Activated naive CD4-positive, alpha-beta T cell treated with anti-CD3 and anti-CD28 coated beads for 36 hours (primary cell): ENCODE measurements at regions of chr6 and their contacts with region 1.

Region 1: DNA sequence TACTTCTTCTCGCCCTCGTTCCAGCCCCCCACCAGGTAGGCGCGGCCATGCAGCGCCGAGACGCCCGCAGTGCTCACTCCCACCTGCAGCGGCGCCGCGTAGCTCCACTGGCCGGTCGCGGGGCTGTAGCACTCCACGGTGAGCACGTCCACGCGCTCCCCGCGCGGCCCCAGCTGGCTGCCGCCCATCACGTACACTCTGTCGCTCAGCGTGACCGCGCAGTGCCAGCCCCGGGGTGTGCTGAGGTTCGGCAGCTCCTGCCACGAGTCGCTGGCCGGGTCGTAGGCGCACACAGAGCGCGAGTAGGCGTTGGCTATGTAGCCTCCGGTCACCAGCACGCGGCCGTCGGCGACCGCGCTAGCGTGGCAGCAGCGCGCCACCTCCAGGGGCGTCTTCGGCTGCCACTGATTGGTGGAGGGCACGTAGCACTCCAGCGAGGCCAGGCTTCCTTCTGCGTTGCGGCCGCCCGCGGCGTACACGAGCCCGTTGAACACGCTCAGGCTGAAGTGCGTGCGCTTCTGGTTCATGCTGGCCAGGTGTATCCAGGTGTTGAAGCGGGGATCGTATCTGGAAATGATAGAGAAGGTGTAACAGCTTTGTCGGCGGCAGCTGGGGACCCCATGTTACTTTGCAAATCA is 13.7 kb downstream of the KLHL31 start:
- DNase-seq: peak; percentile 81
- H3K4me3 Mint-ChIP-seq: peak overlapping the region; percentile 85
- H3K27ac Mint-ChIP-seq: peak overlapping the region; percentile 46
- H3K4me1 Mint-ChIP-seq: peaks cover 26% of the 10 kb centered on the region
- H3K27me3 Mint-ChIP-seq: no peaks in the 10 kb centered on the region

Region 2: GRCh38 chr6:53641348-53641747 is 10.5 kb before region 1 on chr6:
- CTCF ChIA-PET with region 1: interaction called, 12 read pairs
- intact Hi-C with region 1: no loop called
- DNase-seq: no peak
- H3K4me3 Mint-ChIP-seq: no peak overlapping the region
- H3K27ac Mint-ChIP-seq: no peak overlapping the region
- H3K4me1 Mint-ChIP-seq: no peaks in the 10 kb centered on the region
- H3K27me3 Mint-ChIP-seq: no peaks in the 10 kb centered on the region

Region 3: DNA sequence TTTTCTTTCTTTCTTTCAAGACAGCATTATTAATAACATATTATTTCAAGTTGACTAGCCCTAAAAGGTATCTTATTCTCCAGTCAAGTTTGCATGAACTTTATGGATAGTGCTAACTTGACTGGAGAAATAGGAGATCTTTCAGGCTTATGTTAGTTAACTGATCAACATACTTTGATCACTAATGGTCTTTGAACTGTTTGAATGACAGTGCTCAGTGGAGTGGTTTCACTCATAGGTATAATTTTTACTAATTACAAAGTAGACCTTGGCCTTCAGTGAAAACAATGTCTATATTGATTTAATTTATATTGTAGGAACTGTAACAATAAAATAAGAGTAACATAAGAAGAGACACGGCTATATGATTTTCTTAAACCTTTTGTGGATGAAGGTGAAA is 134.9 kb after region 1 on chr6:
- CTCF ChIA-PET with region 1: no interaction called
- intact Hi-C with region 1: no loop called
- DNase-seq: no peak
- H3K4me3 Mint-ChIP-seq: no peak overlapping the region
- H3K27ac Mint-ChIP-seq: no peak overlapping the region
- H3K4me1 Mint-ChIP-seq: no peaks in the 10 kb centered on the region
- H3K27me3 Mint-ChIP-seq: peaks cover 18% of the 10 kb centered on the region